ENCODE measurements at regions of chr14 and their contacts with region 1.

Region 1: GRCh38 chr14:74109369-74109768 is 24.6 kb downstream of the LIN52 start:
- DNase-seq: no peak
- ATAC-seq: no peak
- H3K4me3 ChIP-seq: no peak overlapping the region
- H3K27ac ChIP-seq: no peak overlapping the region
- H3K4me1 ChIP-seq: no peaks in the 10 kb centered on the region
- H3K27me3 ChIP-seq: no peaks in the 10 kb centered on the region
- CTCF ChIP-seq: no peak
- EP300 ChIP-seq: no peak
- POLR2A ChIP-seq: no peak
- RAD21 ChIP-seq: no peak

Region 2: DNA sequence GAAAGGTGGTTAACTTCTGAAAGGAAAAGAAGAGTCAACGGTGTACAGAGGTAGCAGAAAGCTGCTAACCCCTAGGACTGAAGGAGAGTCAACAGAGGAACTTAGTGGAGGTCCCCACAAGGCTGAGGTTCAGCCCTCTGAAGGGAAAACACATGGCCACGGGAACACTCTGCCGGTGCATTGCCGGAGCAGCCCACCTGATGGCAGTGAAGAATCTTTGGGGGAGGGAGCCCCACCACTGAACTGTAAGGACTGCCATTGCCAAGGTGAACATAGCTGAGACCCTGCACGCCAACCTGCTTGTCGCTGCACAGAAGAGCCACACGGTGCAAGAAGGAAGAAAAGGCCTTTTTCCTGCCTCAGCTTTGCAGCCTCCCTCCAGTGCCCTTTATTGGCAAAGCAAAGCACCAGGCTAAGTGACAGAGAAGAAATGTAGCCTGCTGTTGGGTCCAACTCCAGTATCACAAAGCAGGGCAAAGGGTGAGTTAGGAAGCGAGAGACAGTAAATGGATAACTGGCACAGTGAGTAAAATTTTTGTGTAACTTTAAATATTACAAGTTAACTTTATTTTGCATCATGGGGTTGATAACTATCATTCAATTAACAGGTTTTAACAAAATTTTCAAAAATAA is 52.3 kb after region 1 on chr14:
- CTCF ChIA-PET with region 1: no interaction called
- POLR2A ChIA-PET with region 1: no interaction called
- in situ Hi-C with region 1: no loop called
- intact Hi-C with region 1: no loop called
- DNase-seq: no peak
- ATAC-seq: peak; percentile 40; the same call in 1 of the 3 replicates
- H3K4me3 ChIP-seq: no peak overlapping the region
- H3K27ac ChIP-seq: no peak overlapping the region
- H3K4me1 ChIP-seq: no peaks in the 10 kb centered on the region
- H3K27me3 ChIP-seq: no peaks in the 10 kb centered on the region
- CTCF ChIP-seq: 0 out of 2 replicates have a peak, but pooled peaks have one; percentile 5
- EP300 ChIP-seq: no peak
- POLR2A ChIP-seq: no peak
- RAD21 ChIP-seq: no peak

Region 3: GRCh38 chr14:74249433-74250375 is 140.3 kb after region 1 on chr14:
- CTCF ChIA-PET with region 1: interaction called, 23 read pairs
- POLR2A ChIA-PET with region 1: no interaction called
- in situ Hi-C with region 1: loop called (anchors 5 kb)
- intact Hi-C with region 1: loop called (anchors 1 kb)
- DNase-seq: peak; percentile 81
- ATAC-seq: peak; percentile 82
- H3K4me3 ChIP-seq: 0 out of 6 replicates have a peak overlapping the region, but pooled peaks of 1 of the 3 experiments have one; percentile 23
- H3K27ac ChIP-seq: peak overlapping the region; percentile 45
- H3K4me1 ChIP-seq: peaks cover 41% of the 10 kb centered on the region
- H3K27me3 ChIP-seq: peaks cover 1 to 16% of the 10 kb centered on the region in 2 experiments; a peak in 1 of 5 replicates
- CTCF ChIP-seq: no peak
- EP300 ChIP-seq: peak in 1 of 2 experiments; percentile 3; a peak in 1 of 4 replicates
- POLR2A ChIP-seq: no peak
- RAD21 ChIP-seq: no peak

Region 4: DNA sequence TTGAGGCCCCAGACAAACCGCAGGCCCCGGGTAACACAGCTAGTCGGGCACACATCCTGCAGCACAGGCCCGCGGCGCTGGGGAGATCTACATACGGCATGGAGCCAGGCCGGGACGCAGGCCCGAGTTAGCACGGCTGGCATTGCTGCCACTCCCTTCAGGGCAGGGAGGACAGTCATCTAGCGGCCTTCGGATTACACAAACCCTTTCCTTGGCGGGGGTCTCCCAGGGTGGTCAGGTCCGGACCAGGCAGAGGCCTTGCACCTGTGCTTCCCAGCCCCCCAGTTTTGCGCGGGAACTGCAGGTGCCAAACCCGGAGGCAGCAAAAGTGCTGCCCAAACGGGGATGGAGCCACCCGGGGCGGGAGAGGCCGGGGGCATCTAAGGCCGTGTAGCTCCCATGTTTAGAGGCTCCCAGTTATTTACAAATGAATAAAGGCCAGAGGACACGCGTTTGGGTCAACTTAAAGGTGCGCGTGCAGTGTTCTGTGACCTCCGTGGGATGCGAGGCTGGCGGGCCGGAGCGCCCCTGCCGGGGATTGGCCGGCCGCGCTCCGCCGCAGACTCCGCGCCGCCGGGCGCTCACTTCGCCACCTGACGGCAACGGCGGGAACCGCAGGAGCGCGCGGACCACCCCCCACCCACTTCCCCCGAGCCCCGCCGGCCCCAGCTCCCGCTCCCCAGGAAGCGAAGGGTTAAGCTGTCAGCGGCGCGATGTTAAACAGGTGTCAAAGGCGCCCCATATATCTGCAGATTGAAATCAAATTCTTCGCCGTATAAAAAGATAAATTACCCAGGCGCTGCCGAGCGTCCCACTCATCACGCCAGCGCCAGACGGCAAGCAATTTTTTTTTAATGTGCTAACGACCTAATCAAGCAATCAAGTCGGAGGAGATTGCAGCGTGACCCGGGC is 148.0 kb after region 1 on chr14:
- CTCF ChIA-PET with region 1: interaction called, 23 read pairs
- POLR2A ChIA-PET with region 1: no interaction called
- in situ Hi-C with region 1: loop called (anchors 5 kb)
- intact Hi-C with region 1: loop called (anchors 1 kb)
- DNase-seq: no peak
- ATAC-seq: peak; percentile 77
- H3K4me3 ChIP-seq: peak overlapping the region; percentile 57 to 73 (median 69)
- H3K27ac ChIP-seq: no peak overlapping the region
- H3K4me1 ChIP-seq: peaks cover 10% of the 10 kb centered on the region
- H3K27me3 ChIP-seq: peaks cover 10 to 47% of the 10 kb centered on the region in 2 experiments; a peak in 4 of 5 replicates
- CTCF ChIP-seq: peak; percentile 74
- EP300 ChIP-seq: no peak
- POLR2A ChIP-seq: no peak
- RAD21 ChIP-seq: peak; percentile 65

Measured in HepG2 (cell line).